A673 (cell line): ENCODE measurements at regions of chr6 and their contacts with region 1.

Region 1: DNA sequence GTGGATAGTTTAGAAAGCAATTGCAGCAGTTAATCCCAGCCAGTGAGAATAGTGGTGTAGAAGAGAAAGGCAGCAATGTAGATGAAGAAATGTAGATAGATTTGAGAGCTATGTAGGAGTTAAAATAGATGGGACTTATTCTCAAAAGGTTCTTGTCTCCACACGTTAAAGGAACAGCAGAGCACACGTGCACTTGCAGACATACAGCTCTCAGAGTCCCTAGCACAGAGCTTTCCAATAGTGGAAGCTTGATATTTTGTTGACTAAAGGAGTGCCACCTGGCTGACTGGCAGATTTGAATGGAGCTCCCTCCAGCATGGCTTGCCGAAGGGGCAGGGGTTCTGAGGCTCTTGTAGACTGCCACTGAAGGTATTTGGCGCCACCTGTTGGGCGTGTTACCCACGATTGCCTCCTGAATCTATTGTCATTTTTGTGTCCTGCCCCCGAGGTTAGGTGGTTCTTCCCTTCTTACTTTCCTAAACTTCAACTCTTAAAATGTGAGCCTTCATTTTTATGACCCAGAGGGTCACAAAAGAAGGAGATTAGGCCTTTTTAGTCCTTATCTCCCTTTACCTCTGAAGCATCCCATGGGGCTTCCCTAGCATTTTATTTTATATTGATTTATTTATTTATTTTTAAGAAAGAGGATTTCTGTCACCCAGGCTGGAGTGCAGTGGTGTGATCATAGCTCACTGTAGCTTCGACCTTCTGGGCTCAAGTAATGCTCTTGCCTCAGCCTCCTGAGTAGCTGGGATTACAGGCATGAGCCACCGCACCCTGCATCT is 16.4 kb downstream of the BRD2 start:
- DNase-seq: peak; percentile 90
- H3K4me3 ChIP-seq: no peak overlapping the region
- H3K27ac ChIP-seq: no peak overlapping the region
- H3K4me1 ChIP-seq: no peaks in the 10 kb centered on the region
- H3K27me3 ChIP-seq: no peaks in the 10 kb centered on the region
- CTCF ChIP-seq: peak; percentile 91

Region 2: GRCh38 chr6:32838114-32838958 is 146.5 kb before region 1 on chr6 and contains the start of gene TAP2:
- CTCF ChIA-PET with region 1: interaction called, 13 read pairs
- POLR2A ChIA-PET with region 1: no interaction called
- intact Hi-C with region 1: no loop called
- DNase-seq: peak; percentile 93
- H3K4me3 ChIP-seq: peak within 1 kb of the TSS; percentile 88
- H3K27ac ChIP-seq: peak within 1 kb of the TSS; percentile 91
- H3K4me1 ChIP-seq: peaks cover 9% of the 10 kb centered on the region
- H3K27me3 ChIP-seq: no peaks in the 10 kb centered on the region
- CTCF ChIP-seq: peak; percentile 98
- total RNA-seq, gene TAP2: 39.2 and 46.5 TPM in 2 replicates

Region 3: DNA sequence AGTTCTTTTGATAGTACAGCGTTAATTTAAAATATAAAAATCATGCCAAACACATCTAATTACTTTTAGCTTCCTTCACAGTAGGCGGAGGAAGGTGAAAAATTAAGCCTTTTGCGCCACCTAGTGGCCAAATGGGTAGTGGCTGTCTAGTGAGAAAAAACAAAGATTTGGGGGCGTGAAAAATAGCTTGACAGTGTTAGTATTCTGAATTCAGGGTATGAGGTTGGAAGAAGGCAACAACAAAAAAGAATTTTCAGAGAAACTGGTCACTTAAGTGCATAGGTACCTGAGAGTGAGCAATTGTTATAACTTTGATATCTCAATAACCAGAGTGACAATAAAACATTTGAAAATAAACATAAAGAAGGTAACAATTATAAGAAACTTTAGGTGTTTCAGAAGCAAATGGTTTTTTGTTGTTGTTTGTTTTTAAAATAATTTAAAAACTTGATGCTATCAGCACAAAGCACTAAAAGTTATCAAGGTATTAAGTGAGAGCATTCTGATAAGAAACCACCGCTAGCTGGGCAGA is 116.5 kb before region 1 on chr6:
- CTCF ChIA-PET with region 1: interaction called, 11 read pairs
- POLR2A ChIA-PET with region 1: no interaction called
- intact Hi-C with region 1: no loop called
- DNase-seq: peak; percentile 84
- H3K4me3 ChIP-seq: no peak overlapping the region
- H3K27ac ChIP-seq: no peak overlapping the region
- H3K4me1 ChIP-seq: no peaks in the 10 kb centered on the region
- H3K27me3 ChIP-seq: peaks cover 50% of the 10 kb centered on the region
- CTCF ChIP-seq: peak; percentile 91

Region 4: GRCh38 chr6:32885698-32886286 is 99.0 kb before region 1 on chr6:
- CTCF ChIA-PET with region 1: interaction called, 20 read pairs
- POLR2A ChIA-PET with region 1: interaction called, 3 read pairs
- intact Hi-C with region 1: loop called (anchors 1 kb)
- DNase-seq: peak; percentile 79
- H3K4me3 ChIP-seq: no peak overlapping the region
- H3K27ac ChIP-seq: no peak overlapping the region
- H3K4me1 ChIP-seq: peaks cover 5% of the 10 kb centered on the region
- H3K27me3 ChIP-seq: no peaks in the 10 kb centered on the region
- CTCF ChIP-seq: peak; percentile 67

Region 5: DNA sequence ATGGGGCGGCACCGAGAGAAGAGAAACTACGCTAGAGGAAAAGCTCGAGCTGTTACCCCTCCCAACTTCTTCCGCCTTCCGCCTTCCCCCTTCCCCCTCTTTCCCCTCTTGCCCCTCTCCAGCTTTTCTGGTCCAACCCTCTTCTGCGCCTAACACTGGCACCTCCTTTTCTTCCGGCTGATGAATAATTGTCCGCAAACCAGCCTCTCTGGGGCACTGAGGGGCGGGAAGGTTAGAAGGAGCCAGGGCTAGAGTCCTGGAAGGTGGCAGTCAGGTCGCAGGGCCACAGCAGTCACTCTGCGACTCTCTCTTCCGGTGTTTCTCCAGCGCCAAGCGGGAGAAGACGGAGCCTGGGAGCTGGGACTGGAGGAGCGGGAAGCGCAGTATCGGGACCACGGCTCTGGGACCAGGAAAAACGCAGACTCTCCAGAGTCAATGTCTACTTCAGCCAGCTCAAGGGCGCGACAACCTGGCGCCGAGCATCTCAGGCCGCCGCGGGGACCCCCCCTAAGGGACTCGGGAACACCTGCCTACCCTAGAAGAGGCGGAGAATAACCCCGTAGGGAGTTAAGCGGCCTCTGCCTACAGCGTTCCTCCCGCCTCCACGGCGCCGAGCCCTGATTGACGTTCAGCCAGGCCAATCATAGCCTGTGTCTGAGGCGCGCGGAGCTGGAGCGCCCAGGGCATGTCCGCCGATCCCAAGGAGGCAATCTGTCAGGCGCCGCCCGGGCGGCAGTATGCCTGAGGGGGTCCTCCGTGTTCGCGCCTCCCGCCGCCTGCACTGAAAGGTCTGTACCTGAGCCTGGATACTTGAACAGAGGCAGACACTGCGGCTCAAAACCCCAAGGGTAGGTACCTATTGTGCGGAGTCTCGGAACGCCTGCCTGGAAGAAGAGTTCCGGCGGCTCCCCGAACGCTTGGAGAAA is 90.5 kb before region 1 on chr6:
- CTCF ChIA-PET with region 1: interaction called, 12 read pairs
- POLR2A ChIA-PET with region 1: no interaction called
- intact Hi-C with region 1: no loop called
- DNase-seq: peak; percentile 96
- H3K4me3 ChIP-seq: peak overlapping the region; percentile 87
- H3K27ac ChIP-seq: peak overlapping the region; percentile 86
- H3K4me1 ChIP-seq: peaks cover 8% of the 10 kb centered on the region
- H3K27me3 ChIP-seq: no peaks in the 10 kb centered on the region
- CTCF ChIP-seq: 0 out of 2 replicates have a peak, but pooled peaks have one; percentile 12

Region 6: DNA sequence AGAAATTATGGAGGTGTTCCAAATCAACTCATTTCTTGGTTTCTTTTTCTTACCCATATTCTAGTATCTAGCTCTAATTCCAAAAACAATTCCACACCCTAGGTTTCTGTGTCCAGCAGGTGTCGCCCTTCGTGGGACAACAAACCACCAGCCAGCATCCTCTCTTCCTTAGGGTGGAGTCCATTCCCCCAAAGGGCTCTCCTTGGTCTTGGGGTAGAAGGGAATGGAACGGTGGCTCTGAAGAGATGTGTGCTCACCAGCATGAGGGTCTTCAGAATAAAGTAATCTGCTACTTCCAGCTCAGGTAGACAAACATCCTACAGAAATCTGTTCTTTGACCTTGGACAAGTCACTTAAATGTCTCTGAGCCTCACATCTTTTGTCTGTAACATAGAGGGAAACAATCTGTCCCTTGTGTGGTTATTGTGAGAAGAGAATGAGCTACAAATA is 51.1 kb before region 1 on chr6:
- CTCF ChIA-PET with region 1: interaction called, 61 read pairs
- POLR2A ChIA-PET with region 1: interaction called, 3 read pairs
- intact Hi-C with region 1: loop called (anchors 1 kb)
- DNase-seq: peak; percentile 82
- H3K4me3 ChIP-seq: no peak overlapping the region
- H3K27ac ChIP-seq: no peak overlapping the region
- H3K4me1 ChIP-seq: no peaks in the 10 kb centered on the region
- H3K27me3 ChIP-seq: peaks cover 25% of the 10 kb centered on the region
- CTCF ChIP-seq: peak; percentile 88

Region 7: DNA sequence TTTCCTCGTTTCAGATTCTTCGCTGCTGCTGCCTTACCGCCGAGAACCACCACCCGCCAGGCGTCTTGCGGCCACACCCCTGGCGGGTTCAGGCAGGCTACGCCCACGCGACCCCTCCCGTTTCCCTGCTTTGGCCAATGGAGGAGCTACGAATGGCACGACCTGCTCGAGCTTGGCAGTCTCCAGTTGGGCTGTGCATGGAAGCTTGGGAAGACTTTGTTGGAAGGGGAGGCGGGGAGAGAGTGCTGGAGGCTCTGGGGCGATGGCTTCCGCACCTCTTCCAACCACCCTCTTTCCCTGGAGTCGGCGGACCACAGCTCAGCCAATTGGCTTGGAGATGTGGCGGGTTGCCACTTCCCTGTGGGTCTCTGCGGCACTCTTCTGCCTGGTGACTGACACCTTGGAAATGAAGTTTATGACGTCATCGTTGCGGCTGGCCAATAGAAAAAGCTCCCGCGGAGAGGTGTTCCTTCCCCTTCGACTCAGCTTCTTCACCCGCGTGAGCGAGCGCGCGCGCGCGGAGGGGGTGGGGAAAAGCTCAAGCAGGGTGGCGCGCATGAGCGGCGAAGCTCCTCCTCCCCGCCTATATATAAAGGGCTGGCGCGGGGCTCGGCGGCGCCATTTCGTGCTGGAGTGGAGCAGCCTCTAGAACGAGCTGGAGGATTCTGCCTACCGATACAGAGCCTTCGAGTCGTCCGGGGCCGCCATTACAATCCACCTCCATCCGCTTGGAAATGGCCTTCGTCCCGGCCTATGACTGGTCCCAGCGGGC is 13.0 kb before region 1 on chr6:
- CTCF ChIA-PET with region 1: interaction called, 15 read pairs
- POLR2A ChIA-PET with region 1: interaction called, 22 read pairs
- intact Hi-C with region 1: no loop called
- DNase-seq: peak; percentile 100
- H3K4me3 ChIP-seq: peak overlapping the region; percentile 94
- H3K27ac ChIP-seq: peak overlapping the region; percentile 100
- H3K4me1 ChIP-seq: peaks cover 32% of the 10 kb centered on the region
- H3K27me3 ChIP-seq: no peaks in the 10 kb centered on the region
- CTCF ChIP-seq: no peak